ENCODE measurements at regions of chr17 and their contacts with region 1.

Region 1: DNA sequence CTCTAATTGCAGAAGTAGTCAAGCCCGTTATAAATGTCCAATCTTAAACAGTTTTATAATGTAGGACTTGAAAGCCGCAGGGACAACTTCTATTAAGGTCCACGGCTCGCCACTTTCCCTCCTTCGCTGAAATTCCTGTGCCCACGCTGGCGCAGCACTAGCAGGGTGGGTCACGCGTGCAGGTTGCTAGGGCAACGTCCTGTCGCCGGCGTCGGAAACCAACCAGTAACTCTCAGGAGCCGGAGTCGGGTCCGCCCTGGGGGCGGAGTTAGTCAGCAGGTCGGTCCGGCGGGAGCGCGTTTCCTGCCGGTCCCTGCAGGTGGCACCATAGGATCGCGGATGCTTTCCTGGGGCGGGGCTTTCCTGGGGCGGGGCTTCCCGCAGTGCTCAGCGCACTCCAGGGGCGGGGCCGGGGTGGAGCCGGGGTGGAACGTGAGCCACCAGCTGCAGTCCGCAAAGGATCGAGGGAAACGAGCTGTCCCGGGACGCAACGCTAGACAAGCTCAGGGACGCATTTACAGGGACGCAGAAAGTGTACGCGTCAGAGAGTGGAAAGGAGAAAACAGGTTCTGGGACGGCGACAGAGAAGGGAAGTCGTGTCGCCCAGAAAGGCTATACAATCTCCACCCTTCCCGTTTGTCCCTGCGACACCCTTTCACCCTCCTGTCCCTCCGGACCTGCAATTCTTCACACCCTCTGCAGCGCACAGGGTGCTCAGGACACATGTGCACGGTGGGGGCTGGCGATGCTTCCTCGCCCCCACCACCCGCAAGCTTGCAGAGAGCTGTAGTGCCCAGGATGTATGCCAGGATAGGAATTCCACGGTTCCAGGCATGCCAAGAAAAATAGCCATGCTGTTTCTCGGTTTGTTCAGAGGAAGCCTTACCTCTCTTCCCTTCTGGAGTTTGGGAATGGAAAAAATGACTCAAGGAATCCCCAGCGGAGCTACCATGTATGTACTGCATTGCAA is 12.4 kb downstream of the COPZ2 start:
- DNase-seq: peak; percentile 98
- ATAC-seq: peak; percentile 73
- H3K4me3 ChIP-seq: peak overlapping the region; percentile 61 to 62
- H3K27ac ChIP-seq: peak overlapping the region; percentile 93
- H3K4me1 ChIP-seq: peaks cover 26 to 45% of the 10 kb centered on the region in 2 experiments
- H3K27me3 ChIP-seq: no peaks in the 10 kb centered on the region
- CTCF ChIP-seq: peak in 2 of 3 experiments; percentile 87 to 92; a peak in 4 of 6 replicates
- POLR2A ChIP-seq: peak; percentile 69
- RAD21 ChIP-seq: no peak

Region 2: GRCh38 chr17:48037036-48037837 is 12.0 kb after region 1 on chr17 and contains the start of gene COPZ2:
- CTCF ChIA-PET with region 1: interaction called, 38 read pairs
- POLR2A ChIA-PET with region 1: interaction called, 5 read pairs
- RAD21 ChIA-PET with region 1: no interaction called
- intact Hi-C with region 1: no loop called
- DNase-seq: no peak
- ATAC-seq: peak; percentile 25; the same call in 1 of the 2 replicates
- H3K4me3 ChIP-seq: no peak within 1 kb of the TSS
- H3K27ac ChIP-seq: no peak within 1 kb of the TSS
- H3K4me1 ChIP-seq: no peaks in the 10 kb centered on the region
- H3K27me3 ChIP-seq: no peaks in the 10 kb centered on the region
- CTCF ChIP-seq: no peak
- POLR2A ChIP-seq: no peak
- RAD21 ChIP-seq: no peak
- total RNA-seq, gene COPZ2: not detected

Region 3: DNA sequence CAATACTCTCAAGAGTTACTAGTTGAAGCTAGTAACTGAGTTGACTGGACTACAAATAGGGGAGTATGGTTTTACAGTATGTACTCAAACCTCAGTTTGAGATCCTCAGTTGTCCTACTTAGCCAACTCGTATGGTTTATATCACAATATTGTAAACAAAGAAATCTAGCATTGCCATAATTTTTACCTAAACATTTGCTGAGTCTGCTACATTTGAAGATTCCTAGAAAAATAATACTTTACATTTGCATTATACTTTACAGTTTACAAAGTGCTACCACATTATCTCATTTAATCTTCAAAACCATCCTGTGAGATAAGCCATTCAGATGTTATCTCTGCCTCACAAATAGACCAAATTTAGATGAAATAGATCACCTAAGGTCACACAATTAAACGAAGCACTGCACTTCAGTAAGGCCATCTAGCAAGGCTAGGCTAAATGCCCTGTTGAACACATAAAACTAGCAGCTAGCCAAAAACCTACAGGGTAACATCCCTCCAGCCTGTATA is 59.8 kb after region 1 on chr17:
- CTCF ChIA-PET with region 1: interaction called, 29 read pairs
- POLR2A ChIA-PET with region 1: interaction called, 6 read pairs
- RAD21 ChIA-PET with region 1: no interaction called
- intact Hi-C with region 1: no loop called
- DNase-seq: no peak
- ATAC-seq: no peak
- H3K4me3 ChIP-seq: no peak overlapping the region
- H3K27ac ChIP-seq: no peak overlapping the region
- H3K4me1 ChIP-seq: peaks cover 3 to 7% of the 10 kb centered on the region in 2 experiments; a peak in 2 of 4 replicates
- H3K27me3 ChIP-seq: no peaks in the 10 kb centered on the region
- CTCF ChIP-seq: no peak
- POLR2A ChIP-seq: no peak
- RAD21 ChIP-seq: no peak

Region 4: GRCh38 chr17:48215583-48216139 is 190.4 kb after region 1 on chr17:
- CTCF ChIA-PET with region 1: interaction called, 12 read pairs
- POLR2A ChIA-PET with region 1: no interaction called
- RAD21 ChIA-PET with region 1: no interaction called
- intact Hi-C with region 1: loop called (anchors 5 kb)
- DNase-seq: peak; percentile 71
- ATAC-seq: peak; percentile 99
- H3K4me3 ChIP-seq: no peak overlapping the region
- H3K27ac ChIP-seq: no peak overlapping the region
- H3K4me1 ChIP-seq: peaks cover 0 to 16% of the 10 kb centered on the region in 2 experiments; a peak in 1 of 4 replicates
- H3K27me3 ChIP-seq: no peaks in the 10 kb centered on the region
- CTCF ChIP-seq: peak; percentile 80 to 94 (median 91)
- POLR2A ChIP-seq: no peak
- RAD21 ChIP-seq: peak; percentile 98

Region 5: GRCh38 chr17:48374650-48375230 is 349.5 kb after region 1 on chr17:
- CTCF ChIA-PET with region 1: interaction called, 3 read pairs
- POLR2A ChIA-PET with region 1: no interaction called
- RAD21 ChIA-PET with region 1: no interaction called
- intact Hi-C with region 1: loop called (anchors 1 kb)
- DNase-seq: peak; percentile 63
- ATAC-seq: peak; percentile 99
- H3K4me3 ChIP-seq: no peak overlapping the region
- H3K27ac ChIP-seq: no peak overlapping the region
- H3K4me1 ChIP-seq: no peaks in the 10 kb centered on the region
- H3K27me3 ChIP-seq: no peaks in the 10 kb centered on the region
- CTCF ChIP-seq: peak; percentile 92 to 97 (median 94)
- POLR2A ChIP-seq: no peak
- RAD21 ChIP-seq: peak; percentile 91

Region 6: GRCh38 chr17:48791128-48792032 is 766.2 kb after region 1 on chr17:
- CTCF ChIA-PET with region 1: no interaction called
- POLR2A ChIA-PET with region 1: no interaction called
- RAD21 ChIA-PET with region 1: no interaction called
- intact Hi-C with region 1: loop called (anchors 10 kb)
- DNase-seq: peak; percentile 87
- ATAC-seq: peak; percentile 92
- H3K4me3 ChIP-seq: no peak overlapping the region
- H3K27ac ChIP-seq: no peak overlapping the region
- H3K4me1 ChIP-seq: peaks cover 12 to 32% of the 10 kb centered on the region in 2 experiments
- H3K27me3 ChIP-seq: no peaks in the 10 kb centered on the region
- CTCF ChIP-seq: peak; percentile 94 to 98 (median 98)
- POLR2A ChIP-seq: no peak
- RAD21 ChIP-seq: peak; percentile 97

Measured in HCT116 (cell line).